ENCODE measurements at regions of chr4 and their contacts with region 1.

Region 1: GRCh38 chr4:24912252-24913118 is at the start of gene CCDC149:
- DNase-seq: peak; percentile 61
- H3K4me3 ChIP-seq: peak within 1 kb of the TSS; percentile 47 to 56 (median 52)
- H3K27ac ChIP-seq: no peak within 1 kb of the TSS
- H3K4me1 ChIP-seq: peaks cover 4% of the 10 kb centered on the region
- H3K27me3 ChIP-seq: no peaks in the 10 kb centered on the region
- CTCF ChIP-seq: peak in 1 of 2 donors; percentile 8
- total RNA-seq, gene CCDC149: 4.8 to 7.7 TPM

Region 2: DNA sequence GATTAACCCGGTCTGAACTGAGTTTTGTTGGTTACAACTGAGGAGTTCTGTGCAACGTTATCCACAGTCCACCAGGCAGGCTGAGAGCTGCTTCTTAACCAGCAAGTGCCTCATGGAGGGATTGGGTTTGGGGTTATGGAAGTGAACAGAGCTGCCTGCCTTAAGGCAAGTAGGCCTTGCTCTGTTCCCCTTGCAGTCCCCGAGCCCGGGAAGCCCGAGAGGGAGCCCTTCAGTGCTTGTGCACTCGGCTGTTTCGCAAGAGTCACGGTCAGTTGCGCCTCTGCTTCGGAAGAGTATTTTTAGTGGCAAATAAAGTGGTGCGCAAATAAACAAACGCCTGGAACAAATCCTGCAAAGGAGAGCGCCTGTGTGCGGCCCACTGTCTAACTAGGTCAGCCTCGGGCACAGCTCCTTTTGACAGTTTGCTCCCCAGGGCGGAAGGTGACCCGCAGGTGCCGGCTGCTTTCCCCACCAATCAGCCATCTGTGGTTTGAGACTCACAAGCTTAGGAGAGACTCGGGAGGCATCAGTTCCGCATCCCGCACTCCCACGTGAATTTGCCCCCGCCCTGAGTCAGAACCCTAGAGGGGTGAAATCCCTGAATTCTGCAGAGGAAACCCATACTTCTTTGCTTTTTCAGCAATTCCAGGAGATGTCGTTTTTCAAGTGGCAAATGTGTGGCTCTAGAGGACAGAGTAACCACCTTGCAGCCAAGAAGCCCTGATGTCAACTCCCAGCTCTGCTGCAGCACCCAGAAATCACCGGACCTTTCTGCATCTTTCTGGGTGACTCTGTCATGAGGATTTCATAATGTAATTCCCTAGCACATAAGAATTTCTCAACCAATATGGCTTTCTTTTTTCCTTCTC is 61.5 kb after region 1 on chr4:
- CTCF ChIA-PET with region 1: no interaction called
- dilution Hi-C with region 1: no loop called
- in situ Hi-C with region 1: no loop called
- intact Hi-C with region 1: loop called (anchors 5 kb)
- DNase-seq: no peak
- H3K4me3 ChIP-seq: no peak overlapping the region
- H3K27ac ChIP-seq: no peak overlapping the region
- H3K4me1 ChIP-seq: peaks cover 7% of the 10 kb centered on the region
- H3K27me3 ChIP-seq: no peaks in the 10 kb centered on the region
- CTCF ChIP-seq: no peak

Region 3: DNA sequence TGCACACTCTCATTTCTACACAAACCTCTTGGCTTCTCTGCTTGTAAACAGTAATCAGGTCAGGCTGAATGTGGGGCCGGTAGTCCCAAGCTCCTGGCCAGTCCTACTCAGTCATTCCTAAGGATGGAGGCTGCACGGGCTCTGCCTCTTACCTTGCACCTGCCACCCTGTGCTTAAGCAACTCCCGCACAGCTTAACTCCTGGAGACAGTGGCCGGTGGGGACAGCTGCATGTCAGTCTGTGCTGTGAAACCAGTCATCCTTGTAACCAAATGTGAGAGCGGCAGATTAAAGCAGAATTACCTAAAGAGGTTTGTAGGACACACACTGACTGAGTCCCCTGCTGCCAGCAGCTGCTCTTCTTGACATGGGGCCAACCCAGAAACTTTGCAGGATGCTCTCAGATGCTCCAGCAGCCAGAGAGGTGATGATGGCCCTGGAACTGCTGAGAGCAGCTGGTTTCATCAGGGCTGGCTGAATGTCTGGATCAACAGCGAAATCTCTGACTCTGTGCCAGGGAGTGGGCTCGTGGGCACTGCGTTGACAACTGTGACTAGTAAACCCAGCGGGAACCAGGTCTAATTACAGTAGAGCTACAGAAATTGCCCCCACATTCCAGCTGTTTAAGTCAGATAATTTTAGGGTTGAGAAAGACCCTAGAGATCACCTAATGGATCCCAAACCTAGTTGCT is 588.3 kb after region 1 on chr4:
- CTCF ChIA-PET with region 1: no interaction called
- dilution Hi-C with region 1: no loop called
- in situ Hi-C with region 1: no loop called
- intact Hi-C with region 1: no loop called
- DNase-seq: no peak
- H3K4me3 ChIP-seq: no peak overlapping the region
- H3K27ac ChIP-seq: no peak overlapping the region
- H3K4me1 ChIP-seq: no peaks in the 10 kb centered on the region
- H3K27me3 ChIP-seq: no peaks in the 10 kb centered on the region
- CTCF ChIP-seq: no peak

Region 4: DNA sequence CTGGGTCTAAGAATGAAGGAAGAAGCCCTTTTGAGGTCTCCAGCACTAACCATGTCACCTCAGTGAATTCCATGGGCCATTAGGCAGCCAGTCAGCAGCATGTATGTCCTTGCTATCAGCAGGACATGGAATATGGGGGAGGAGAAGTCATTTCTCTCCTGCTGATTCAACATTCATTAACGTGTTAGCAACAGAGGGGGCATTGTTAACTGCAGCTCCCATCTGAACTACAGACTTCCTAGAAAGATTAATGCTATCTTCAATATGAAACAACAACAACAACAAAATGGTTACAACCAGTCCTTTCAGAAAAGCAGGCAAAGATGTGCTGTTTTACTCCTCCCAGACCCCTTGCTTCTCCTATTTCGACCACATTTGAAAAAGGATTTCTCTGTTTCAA is 622.8 kb after region 1 on chr4:
- CTCF ChIA-PET with region 1: no interaction called
- dilution Hi-C with region 1: no loop called
- in situ Hi-C with region 1: no loop called
- intact Hi-C with region 1: loop called (anchors 5 kb)
- DNase-seq: no peak
- H3K4me3 ChIP-seq: no peak overlapping the region
- H3K27ac ChIP-seq: no peak overlapping the region
- H3K4me1 ChIP-seq: no peaks in the 10 kb centered on the region
- H3K27me3 ChIP-seq: no peaks in the 10 kb centered on the region
- CTCF ChIP-seq: no peak

Measured in mammary epithelial cell (primary cell).